Right cardiac atrium (tissue), 5 donors: ENCODE measurements at regions of chr15 and their contacts with region 1.

Region 1: GRCh38 chr15:49895337-49896223 is 223.5 kb downstream of the ATP8B4 start:
- DNase-seq: no peak
- ATAC-seq: no peak
- H3K4me3 ChIP-seq: no peak overlapping the region
- H3K27ac ChIP-seq: no peak overlapping the region
- H3K4me1 ChIP-seq: peaks cover 2% of the 10 kb centered on the region
- H3K27me3 ChIP-seq: no peaks in the 10 kb centered on the region

Region 2: GRCh38 chr15:49620658-49621368 is 274.8 kb before region 1 on chr15 and contains the starts of genes DTWD1 and FAM227B:
- intact Hi-C with region 1: loop called in 1 of 4 experiments (anchors 10 kb)
- DNase-seq: peak; percentile 98 to 99 (median 99)
- ATAC-seq: peak; percentile 100
- H3K4me3 ChIP-seq: peak within 1 kb of the TSS; percentile 54
- H3K27ac ChIP-seq: peak within 1 kb of the TSS; percentile 78
- H3K4me1 ChIP-seq: no peaks in the 10 kb centered on the region
- H3K27me3 ChIP-seq: no peaks in the 10 kb centered on the region
- total RNA-seq, gene DTWD1: 23.4 to 31.2 (median 26.8) TPM
- total RNA-seq, gene FAM227B: 9.8 to 19.2 (median 12.5) TPM